Adrenal gland (tissue), 19 donors: ENCODE measurements at regions of chr1 and their contacts with region 1.

Region 1: GRCh38 chr1:209860293-209860881 is 32.6 kb downstream of the UTP25 start:
- DNase-seq: peak; percentile 81 to 95 (median 92)
- H3K4me3 ChIP-seq: no peak overlapping the region
- H3K27ac ChIP-seq: no peak overlapping the region
- H3K4me1 ChIP-seq: no peaks in the 10 kb centered on the region
- H3K27me3 ChIP-seq: no peaks in the 10 kb centered on the region
- CTCF ChIP-seq: peak; percentile 75 to 96 (median 82)
- POLR2A ChIP-seq: no peak

Region 2: DNA sequence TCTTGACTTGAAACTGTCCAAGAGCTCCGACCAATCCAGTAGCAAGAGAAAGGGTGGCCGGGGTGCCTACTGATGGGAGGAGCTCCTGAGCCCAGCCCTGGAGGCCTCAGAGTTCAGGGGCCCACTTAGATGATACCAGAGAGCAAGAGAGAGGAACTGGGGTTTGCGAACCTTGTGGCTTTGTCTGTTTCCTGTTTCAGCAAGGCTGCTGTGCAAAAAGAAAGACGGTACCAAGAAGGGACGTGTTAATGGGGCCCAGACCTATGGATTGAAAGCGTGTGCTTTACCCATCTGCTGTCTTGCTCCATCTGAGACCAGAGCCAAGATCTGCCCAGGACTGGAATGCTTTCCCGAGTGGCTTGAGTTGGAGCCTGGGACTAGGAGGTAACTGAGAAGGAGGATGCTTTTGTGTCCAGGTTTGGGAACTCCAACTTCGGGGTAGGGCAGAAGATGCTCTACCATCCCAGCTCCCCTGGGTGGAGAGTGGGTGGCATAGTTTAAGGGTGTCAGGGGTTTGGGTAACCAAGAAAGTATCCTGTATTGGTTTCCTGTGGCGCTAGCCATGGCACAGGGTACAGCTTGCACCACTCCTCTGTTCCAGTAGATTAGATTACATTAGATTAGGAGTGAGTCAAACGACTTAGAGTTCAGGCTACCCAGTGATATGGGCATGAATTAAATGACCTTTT is 104.3 kb before region 1 on chr1 and contains the start of gene TRAF3IP3:
- intact Hi-C with region 1: no loop called
- DNase-seq: peak in 3 of 7 donors; percentile 19 to 36 (median 32)
- H3K4me3 ChIP-seq: peak within 1 kb of the TSS in 1 of 4 donors; percentile 11
- H3K27ac ChIP-seq: peak within 1 kb of the TSS in 1 of 5 donors; percentile 29
- H3K4me1 ChIP-seq: no peaks in the 10 kb centered on the region
- H3K27me3 ChIP-seq: no peaks in the 10 kb centered on the region
- CTCF ChIP-seq: no peak
- POLR2A ChIP-seq: no peak
- total RNA-seq, gene TRAF3IP3: 0.88 to 9.8 (median 2.0) TPM

Region 3: DNA sequence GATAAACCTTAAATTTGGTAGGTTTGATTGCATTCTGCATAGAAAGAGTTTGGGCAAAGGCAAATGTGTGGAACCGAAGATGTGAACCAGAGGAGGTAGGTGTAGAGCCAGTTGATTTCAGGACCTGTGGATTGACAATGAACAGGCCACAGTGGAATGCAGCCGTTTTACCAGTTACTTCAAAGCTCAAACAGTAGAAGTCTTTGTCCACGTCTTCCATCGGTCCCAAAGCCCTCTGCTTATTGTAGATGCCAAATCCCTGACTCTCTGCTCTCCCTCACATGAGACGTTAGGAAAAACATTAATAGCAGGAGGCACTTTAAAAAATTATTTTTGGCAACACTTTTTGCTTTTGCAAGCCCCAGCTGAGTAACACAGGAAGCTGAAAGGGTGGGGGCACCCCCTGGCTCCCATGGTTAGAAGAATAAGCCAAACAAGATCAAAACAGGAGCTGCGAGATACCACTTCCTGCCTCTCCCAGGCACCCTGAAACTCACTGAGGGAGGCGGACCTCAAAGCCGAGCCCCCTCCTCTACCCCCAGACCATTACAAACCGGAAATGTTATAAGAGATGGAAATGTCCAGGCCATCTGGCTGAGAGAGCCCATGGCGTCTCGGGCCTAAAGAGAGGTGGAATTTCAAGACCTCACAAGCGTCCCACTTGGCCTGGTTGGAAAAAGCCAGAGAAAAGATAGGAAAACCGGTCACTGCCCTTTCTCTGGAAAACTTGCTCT is 91.0 kb before region 1 on chr1:
- intact Hi-C with region 1: no loop called
- DNase-seq: peak; percentile 37 to 81 (median 56)
- H3K4me3 ChIP-seq: no peak overlapping the region
- H3K27ac ChIP-seq: peak overlapping the region in 3 of 5 donors; percentile 51 to 59 (median 55)
- H3K4me1 ChIP-seq: peaks cover 0 to 12% of the 10 kb centered on the region in 2 donors
- H3K27me3 ChIP-seq: no peaks in the 10 kb centered on the region
- CTCF ChIP-seq: no peak
- POLR2A ChIP-seq: no peak

Region 4: GRCh38 chr1:209805875-209806760 is 54.3 kb before region 1 on chr1 and contains the start of gene IRF6:
- intact Hi-C with region 1: no loop called
- DNase-seq: peak; percentile 90 to 94 (median 92)
- H3K4me3 ChIP-seq: peak within 1 kb of the TSS in 3 of 4 donors; percentile 27 to 65 (median 27)
- H3K27ac ChIP-seq: peak within 1 kb of the TSS; percentile 37 to 87 (median 77)
- H3K4me1 ChIP-seq: peaks cover 22 to 46% of the 10 kb centered on the region in 2 donors
- H3K27me3 ChIP-seq: no peaks in the 10 kb centered on the region
- CTCF ChIP-seq: no peak
- POLR2A ChIP-seq: peak in 1 of 2 donors; percentile 75
- total RNA-seq, gene IRF6: 8.1 to 60.2 (median 35.9) TPM

Region 5: GRCh38 chr1:209937996-209938959 is 77.9 kb after region 1 on chr1 and contains the start of gene SYT14:
- intact Hi-C with region 1: loop called in 1 of 2 experiments (anchors 10 kb)
- DNase-seq: peak; percentile 50 to 78 (median 68)
- H3K4me3 ChIP-seq: peak within 1 kb of the TSS in 2 of 4 donors; percentile 29 to 73
- H3K27ac ChIP-seq: peak within 1 kb of the TSS in 4 of 5 donors; percentile 34 to 85 (median 70)
- H3K4me1 ChIP-seq: no peaks in the 10 kb centered on the region
- H3K27me3 ChIP-seq: peaks cover 7% of the 10 kb centered on the region
- CTCF ChIP-seq: peak in 3 of 6 experiments; percentile 8 to 20 (median 8)
- POLR2A ChIP-seq: peak; percentile 20 to 38
- total RNA-seq, gene SYT14: 2.2 to 8.1 (median 3.9) TPM

Region 6: GRCh38 chr1:209989525-209989924 is 129.1 kb after region 1 on chr1:
- intact Hi-C with region 1: loop called (anchors 5 kb)
- DNase-seq: no peak
- H3K4me3 ChIP-seq: no peak overlapping the region
- H3K27ac ChIP-seq: no peak overlapping the region
- H3K4me1 ChIP-seq: no peaks in the 10 kb centered on the region
- H3K27me3 ChIP-seq: no peaks in the 10 kb centered on the region
- CTCF ChIP-seq: peak; percentile 10 to 57 (median 36)
- POLR2A ChIP-seq: no peak

Region 7: DNA sequence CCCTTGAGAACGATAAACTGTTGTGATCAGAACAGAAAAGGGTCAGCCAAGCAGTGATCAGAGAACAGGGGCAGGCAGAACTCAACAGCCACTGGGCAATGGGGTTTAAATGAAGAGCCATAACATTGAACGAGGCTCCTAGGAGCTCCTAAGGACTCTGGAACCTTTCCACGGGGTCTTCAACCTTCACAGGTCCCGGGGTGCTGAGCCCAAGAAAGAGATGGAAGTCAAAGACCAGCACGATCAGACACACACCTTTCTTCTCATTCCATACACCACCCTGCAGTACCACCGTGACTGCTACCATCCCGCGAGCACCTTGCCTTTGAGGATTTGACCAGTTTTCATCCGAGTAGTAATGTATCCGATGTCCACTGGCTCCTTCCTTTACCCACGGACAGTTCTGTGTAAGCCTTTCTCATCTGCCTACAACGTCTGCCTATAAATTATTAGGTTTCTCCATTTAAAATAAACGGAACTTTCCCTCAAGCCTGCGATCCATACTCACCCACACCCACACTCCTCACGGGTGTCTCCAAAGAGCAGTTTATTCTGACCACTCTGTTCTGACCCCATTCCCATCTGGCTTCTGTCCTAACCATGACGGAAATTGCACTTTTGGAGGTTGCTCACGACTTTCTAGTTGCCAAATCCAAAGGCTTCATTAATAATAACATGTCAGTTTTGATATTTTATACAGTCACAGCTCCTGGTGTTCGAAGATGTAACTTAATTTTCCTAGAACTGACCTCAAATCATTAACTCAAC is 451.5 kb after region 1 on chr1:
- intact Hi-C with region 1: loop called in 1 of 2 experiments (anchors 5 kb)
- DNase-seq: peak in 2 of 7 donors; percentile 30 to 32
- H3K4me3 ChIP-seq: peak overlapping the region in 1 of 4 donors; percentile 23
- H3K27ac ChIP-seq: peak overlapping the region in 2 of 5 donors; percentile 21 to 71
- H3K4me1 ChIP-seq: peaks cover 5% of the 10 kb centered on the region in 2 donors
- H3K27me3 ChIP-seq: no peaks in the 10 kb centered on the region
- CTCF ChIP-seq: no peak
- POLR2A ChIP-seq: no peak